GM10248 (cell line): ENCODE measurements at regions of chr4 and their contacts with region 1.

Region 1: DNA sequence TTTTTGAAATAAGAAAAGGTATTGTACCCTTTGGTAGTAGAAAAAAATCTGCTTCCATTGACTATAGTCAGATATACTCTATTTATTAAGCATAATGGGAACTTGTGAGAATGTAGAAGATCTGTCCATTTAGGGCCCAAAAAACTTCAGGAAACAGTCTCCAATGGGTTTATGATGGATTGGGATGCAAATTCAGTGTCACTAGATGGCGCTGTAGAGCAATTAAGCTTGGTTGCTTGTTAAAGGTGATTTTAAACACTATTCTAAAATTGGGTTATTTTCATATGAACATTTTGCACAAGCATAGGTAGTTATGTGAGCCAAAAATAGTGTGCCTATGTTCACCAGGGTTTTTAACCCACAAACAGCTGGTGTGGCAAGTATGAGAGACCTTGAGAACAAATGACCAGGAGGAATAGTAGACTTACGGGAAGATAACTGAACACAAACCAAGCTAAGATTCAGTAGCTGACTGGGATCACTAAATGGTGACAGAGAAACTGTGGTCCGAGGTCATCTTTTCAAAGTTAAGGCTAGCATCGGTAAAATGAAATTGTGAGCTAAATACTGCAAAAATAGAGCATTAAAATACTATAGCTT is 80.3 kb upstream of the LSM6 start:
- DNase-seq: no peak
- CTCF ChIP-seq: peak; percentile 54

Region 2: DNA sequence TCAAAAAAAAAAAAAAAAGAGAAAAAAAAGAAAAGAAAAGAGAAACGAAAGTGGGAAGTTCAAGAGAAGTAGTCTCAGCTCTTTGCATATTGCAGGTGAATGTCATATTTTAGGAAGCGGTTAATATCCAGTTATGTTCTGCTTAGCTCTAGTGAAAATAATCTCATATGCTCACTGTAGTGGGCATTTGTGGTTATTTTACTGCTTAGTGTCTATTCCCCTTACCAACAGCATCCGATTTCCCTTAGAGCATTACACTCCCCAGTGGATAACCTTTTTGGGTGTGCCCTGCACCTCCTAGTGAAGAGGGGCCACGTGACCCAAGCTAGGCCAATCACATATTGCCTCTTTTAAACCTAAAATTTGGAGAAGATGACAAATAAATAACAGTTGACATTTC is 45.4 kb before region 1 on chr4:
- CTCF ChIA-PET with region 1: interaction called, 17 read pairs
- POLR2A ChIA-PET with region 1: no interaction called
- DNase-seq: peak; percentile 54
- CTCF ChIP-seq: no peak

Region 3: DNA sequence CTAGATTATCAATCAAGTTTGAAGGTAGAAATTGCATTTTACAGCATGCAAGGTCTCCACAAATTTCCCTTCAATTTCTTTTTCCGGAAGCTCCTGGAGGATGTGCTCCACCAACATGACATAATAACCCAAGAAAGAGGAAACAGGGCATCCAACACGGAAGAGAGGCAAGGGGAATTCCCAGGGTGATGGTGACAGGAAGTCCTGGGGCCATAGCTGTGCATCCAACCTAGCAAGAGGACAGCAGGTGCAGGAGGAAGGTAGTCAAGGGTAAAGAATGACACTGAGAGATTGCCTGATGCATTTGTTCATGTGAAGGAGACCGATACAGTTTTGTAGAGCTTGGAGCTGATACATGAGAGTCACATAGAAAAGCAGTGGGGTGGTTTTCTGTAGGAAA is 35.3 kb before region 1 on chr4:
- CTCF ChIA-PET with region 1: interaction called, 21 read pairs
- POLR2A ChIA-PET with region 1: no interaction called
- DNase-seq: peak; percentile 44
- CTCF ChIP-seq: no peak

Region 4: GRCh38 chr4:146073517-146073916 is 21.7 kb before region 1 on chr4:
- CTCF ChIA-PET with region 1: interaction called, 34 read pairs
- POLR2A ChIA-PET with region 1: no interaction called
- DNase-seq: no peak
- CTCF ChIP-seq: no peak

Region 5: GRCh38 chr4:146105464-146105863 is 10.3 kb after region 1 on chr4:
- CTCF ChIA-PET with region 1: interaction called, 56 read pairs
- POLR2A ChIA-PET with region 1: no interaction called
- DNase-seq: no peak
- CTCF ChIP-seq: no peak

Region 6: DNA sequence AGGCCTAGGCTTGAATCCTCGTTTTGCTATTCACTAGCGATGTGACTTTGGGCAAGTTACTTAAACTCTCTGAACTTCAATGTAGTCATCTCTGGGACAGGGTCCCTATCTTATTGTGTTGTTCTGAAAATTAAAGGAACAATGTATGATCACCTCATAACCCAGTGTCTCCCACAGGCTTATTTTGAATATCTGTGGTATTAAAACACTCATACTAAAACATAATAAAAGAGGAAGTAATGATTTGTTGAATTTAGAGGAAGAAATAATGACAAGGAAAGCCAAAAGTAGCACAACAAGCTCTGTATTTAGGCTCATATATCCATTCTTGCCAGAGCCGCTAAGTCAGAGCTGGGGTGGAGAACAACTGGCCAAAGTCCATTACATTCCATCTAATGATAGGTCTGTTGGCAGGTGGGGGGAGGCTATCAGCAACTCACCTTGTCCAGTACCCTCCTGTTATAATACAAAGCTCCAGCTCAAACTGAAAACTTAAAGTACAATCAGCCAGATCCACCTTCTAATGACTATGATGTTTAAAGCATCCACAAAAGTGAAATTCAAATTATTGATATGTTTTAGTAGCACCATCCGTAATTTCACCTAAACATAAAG is 15.8 kb after region 1 on chr4:
- CTCF ChIA-PET with region 1: interaction called, 56 read pairs
- POLR2A ChIA-PET with region 1: no interaction called
- DNase-seq: no peak
- CTCF ChIP-seq: no peak

Region 7: DNA sequence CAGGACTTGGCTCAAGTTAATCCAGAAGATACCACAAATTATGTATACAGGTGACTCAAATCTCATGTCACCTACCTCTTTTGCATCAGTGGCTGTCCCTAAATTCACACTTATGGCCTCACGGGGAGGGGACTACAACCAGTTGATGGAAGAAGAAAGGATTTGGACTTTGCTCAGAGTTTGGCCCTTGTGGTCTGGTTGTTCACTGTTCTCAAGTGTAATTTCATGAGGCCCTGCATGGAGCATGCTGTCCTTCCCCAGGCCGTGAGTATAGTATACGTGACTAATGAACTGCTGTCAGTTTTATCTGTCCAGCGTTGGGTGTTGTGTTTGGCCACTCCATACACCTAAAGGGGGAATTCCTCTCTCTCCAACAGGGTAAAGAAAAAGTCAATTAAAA is 52.8 kb after region 1 on chr4:
- CTCF ChIA-PET with region 1: interaction called, 10 read pairs
- POLR2A ChIA-PET with region 1: no interaction called
- DNase-seq: no peak
- CTCF ChIP-seq: no peak